ENCODE measurements at regions of chr7 and their contacts with region 1.

Region 1: DNA sequence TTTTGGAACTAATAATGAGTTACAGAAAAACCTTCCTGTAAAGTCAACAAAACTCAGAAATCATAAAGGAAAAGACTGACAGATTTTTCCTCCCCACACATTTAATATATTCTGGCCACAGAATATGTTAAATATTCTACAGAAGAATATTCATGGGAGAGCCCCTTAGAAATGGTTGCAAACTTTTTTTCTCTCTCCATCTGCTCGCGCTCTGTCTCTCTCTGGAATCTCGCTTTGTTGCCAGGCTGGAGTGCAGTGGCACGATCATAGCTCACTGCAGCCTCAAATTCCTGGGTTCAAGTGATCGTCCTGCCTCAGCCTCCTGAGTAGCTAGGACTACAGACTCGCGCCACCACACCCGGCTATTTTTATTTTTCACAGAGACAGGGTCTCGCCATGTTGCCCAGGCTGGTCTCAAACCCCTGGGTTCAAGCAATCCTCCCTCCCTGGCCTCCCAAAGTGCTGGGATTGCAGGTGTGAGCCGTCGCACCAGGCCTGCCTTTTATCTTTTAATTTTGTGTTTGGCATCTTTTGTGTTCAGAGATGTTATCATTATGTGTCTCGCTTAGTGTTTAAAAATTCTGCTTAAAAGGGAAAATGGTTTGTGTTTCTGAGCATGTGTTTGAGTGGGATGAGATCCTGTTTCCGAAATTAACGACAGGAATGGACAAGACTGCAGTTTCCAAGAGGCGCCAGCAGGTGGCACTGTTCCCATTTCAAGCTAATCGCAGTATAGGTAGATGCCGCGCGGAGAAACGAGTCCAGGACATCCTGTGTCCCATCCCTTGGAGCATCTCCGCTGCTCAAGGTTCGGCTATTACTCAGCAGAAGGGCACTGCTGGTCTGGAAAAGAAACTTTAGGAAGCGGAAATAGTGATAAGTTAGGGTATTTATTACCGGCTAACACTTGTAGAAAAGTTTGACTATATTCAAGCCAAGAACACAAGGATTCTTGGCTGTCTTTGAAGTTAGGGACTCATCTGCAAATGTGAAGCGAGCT is 23.1 kb upstream of the ST7 start:
- DNase-seq: peak; percentile 72 to 94 (median 90)
- H3K4me3 ChIP-seq: no peak overlapping the region
- H3K27ac ChIP-seq: no peak overlapping the region
- H3K4me1 ChIP-seq: no peaks in the 10 kb centered on the region
- H3K27me3 ChIP-seq: no peaks in the 10 kb centered on the region
- CTCF ChIP-seq: peak; percentile 87 to 97 (median 94)
- POLR2A ChIP-seq: no peak

Region 2: DNA sequence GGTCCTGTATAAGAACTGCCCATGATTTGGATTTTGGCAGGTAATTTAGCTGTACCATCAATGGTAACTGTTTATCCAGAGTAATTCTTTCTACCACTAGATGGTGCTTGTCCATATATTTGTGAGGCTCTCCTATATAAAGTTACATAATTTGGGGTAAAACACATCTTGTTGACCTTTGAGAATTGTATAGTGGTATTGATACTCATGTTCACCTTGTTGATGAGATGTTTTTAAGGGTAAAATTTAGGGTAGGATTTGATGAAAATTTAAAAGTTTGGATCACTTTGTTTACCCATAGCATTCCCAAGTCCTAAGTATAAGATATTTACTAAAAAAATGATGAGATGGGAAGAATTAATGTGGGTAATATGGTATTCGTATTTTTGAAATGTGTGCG is 54.7 kb after region 1 on chr7:
- intact Hi-C with region 1: loop called in 1 of 2 experiments (anchors 10 kb)
- DNase-seq: no peak
- H3K4me3 ChIP-seq: no peak overlapping the region
- H3K27ac ChIP-seq: no peak overlapping the region
- H3K4me1 ChIP-seq: no peaks in the 10 kb centered on the region
- H3K27me3 ChIP-seq: no peaks in the 10 kb centered on the region
- CTCF ChIP-seq: peak; percentile 44 to 74 (median 63)
- POLR2A ChIP-seq: no peak

Region 3: GRCh38 chr7:117119192-117119924 is 189.1 kb after region 1 on chr7:
- intact Hi-C with region 1: loop called in 1 of 2 experiments (anchors 5 kb)
- DNase-seq: peak; percentile 79 to 93 (median 87)
- H3K4me3 ChIP-seq: no peak overlapping the region
- H3K27ac ChIP-seq: no peak overlapping the region
- H3K4me1 ChIP-seq: peaks cover 2 to 4% of the 10 kb centered on the region in 2 donors
- H3K27me3 ChIP-seq: no peaks in the 10 kb centered on the region
- CTCF ChIP-seq: peak; percentile 79 to 95 (median 90)
- POLR2A ChIP-seq: no peak

Region 4: DNA sequence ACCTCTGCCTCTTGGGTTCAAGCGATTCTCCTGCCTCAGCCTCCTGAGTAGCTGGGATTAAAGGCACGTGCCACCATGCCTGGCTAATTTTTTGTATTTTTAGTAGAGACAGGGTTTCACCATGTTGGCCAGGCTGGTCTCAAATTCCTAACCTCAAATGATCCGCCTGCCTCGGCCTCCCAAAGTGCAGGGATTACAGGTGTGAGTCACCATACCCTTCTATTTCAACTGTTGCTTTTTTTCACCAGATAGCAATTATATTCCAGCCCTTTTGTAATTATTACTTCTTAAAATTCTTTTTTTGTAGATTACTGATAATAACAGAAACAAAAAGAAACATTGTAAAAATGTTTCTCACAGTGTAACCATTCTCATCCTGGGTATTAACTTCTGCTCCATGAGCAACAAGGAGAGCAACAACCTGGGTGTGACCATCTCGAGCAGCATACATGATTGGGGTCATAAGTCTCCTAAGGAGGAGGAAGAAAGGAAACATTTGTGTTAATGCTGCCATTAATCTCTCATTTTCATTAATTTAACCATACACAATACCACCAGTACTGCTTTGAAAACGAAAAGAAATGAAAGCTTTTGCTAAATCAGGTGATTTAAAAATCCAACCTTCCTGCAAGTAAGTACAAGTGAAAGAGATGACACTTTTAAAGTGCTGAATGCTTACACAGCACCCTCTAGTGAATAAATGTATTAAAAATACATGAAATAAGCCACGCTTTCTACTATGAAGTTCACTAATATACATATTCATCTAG is 455.3 kb after region 1 on chr7:
- intact Hi-C with region 1: loop called in 1 of 2 experiments (anchors 10 kb)
- DNase-seq: no peak
- H3K4me3 ChIP-seq: no peak overlapping the region
- H3K27ac ChIP-seq: no peak overlapping the region
- H3K4me1 ChIP-seq: no peaks in the 10 kb centered on the region
- H3K27me3 ChIP-seq: no peaks in the 10 kb centered on the region
- CTCF ChIP-seq: peak in 4 of 6 experiments; percentile 17 to 48 (median 28)
- POLR2A ChIP-seq: no peak

Measured in adrenal gland (tissue), 19 donors.